Activated CD8-positive, alpha-beta T cell treated with anti-CD3 and anti-CD28 coated beads, Interleukin-2, amount 10 ng/mL, durations not matched to agents 7 days and 5 days (primary cell): ENCODE measurements at regions of chr5 and their contacts with region 1.

Region 1: DNA sequence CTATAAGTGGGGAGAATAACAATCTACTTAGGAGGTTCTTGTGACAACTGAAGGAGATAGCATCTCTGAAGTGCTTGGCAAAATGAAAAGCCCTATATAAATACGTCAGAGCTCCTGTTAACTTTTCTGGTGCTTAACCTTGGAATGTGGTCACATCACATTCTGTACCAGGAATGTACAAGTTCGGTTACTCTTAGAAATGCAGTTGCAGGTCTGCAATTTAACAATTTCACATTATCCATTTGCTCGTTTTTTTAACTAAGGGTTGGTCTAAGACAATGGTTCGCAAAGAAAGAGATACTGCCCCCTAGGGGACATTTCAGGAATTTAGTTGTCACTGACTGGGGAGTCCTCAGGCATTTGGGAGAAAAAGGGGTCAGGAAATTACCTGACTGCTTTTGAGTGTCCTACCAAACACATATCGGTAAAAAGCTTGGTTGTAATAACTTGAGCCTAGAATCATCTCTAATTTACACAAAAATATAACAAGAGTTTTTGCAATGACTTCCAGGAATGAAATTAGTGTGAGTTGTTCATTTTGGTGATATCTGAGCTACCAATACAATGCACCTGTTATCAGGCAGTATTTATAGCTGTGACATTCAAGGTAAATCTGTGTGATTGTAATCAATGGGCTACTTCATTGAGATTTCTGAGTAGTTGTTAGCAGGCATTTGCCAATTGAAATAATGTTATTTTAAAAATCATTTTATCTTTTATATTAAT is 5.4 kb upstream of the HBEGF start:
- DNase-seq: peak; percentile 84
- ATAC-seq: peak; percentile 84
- H3K4me3 Mint-ChIP-seq: no peak overlapping the region
- H3K27ac Mint-ChIP-seq: peak overlapping the region; percentile 10
- H3K4me1 Mint-ChIP-seq: peaks cover 29% of the 10 kb centered on the region
- H3K27me3 Mint-ChIP-seq: peaks cover 7% of the 10 kb centered on the region

Region 2: GRCh38 chr5:140284013-140284412 is 67.8 kb before region 1 on chr5:
- CTCF ChIA-PET with region 1: interaction called, 14 read pairs
- POLR2A ChIA-PET with region 1: interaction called, 3 read pairs
- DNase-seq: no peak
- ATAC-seq: no peak
- H3K4me3 Mint-ChIP-seq: no peak overlapping the region
- H3K27ac Mint-ChIP-seq: no peak overlapping the region
- H3K4me1 Mint-ChIP-seq: peaks cover 15% of the 10 kb centered on the region
- H3K27me3 Mint-ChIP-seq: no peaks in the 10 kb centered on the region

Region 3: DNA sequence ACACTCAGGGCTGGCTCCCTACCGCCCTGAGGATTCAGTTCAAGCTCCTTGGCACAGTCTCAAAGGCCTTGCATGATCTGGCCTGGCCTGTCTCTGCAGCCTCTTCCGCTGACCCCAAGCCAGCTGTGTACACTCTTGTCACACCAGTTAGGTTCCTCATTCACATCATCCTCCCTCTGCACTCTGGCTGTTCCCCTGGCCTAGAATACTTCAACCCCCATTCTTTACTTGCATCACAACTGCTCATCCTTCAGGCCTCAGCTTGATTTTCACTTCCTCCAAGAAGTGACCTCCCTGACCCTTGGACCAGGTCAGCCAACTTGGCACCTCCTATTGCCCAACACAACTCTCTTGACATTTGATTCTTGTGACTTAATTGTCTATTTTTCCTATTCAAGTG is 30.0 kb before region 1 on chr5:
- CTCF ChIA-PET with region 1: interaction called, 10 read pairs
- POLR2A ChIA-PET with region 1: interaction called, 3 read pairs
- DNase-seq: no peak
- ATAC-seq: no peak
- H3K4me3 Mint-ChIP-seq: no peak overlapping the region
- H3K27ac Mint-ChIP-seq: no peak overlapping the region
- H3K4me1 Mint-ChIP-seq: no peaks in the 10 kb centered on the region
- H3K27me3 Mint-ChIP-seq: peaks cover 6% of the 10 kb centered on the region

Region 4: DNA sequence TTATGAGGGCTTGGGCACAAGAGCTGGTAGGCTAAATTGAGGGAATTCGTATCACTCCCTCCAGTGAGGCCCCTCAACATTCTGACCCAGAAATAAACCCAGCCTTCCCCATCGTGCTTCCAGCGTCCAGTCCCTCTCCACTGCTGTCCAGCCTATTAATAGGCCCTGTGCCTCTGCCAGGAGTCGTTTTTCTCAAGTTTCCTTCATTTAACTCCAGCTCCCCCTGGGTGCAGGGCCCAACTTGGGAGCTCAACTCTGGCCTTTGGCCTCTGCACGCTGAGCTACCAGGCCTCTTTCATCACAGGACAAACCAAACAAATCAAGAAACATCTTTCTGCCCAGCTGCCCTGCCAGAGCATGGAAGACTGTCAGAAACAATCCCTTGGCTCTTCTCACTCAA is 15.4 kb before region 1 on chr5:
- CTCF ChIA-PET with region 1: interaction called, 39 read pairs
- POLR2A ChIA-PET with region 1: interaction called, 3 read pairs
- DNase-seq: no peak
- ATAC-seq: no peak
- H3K4me3 Mint-ChIP-seq: no peak overlapping the region
- H3K27ac Mint-ChIP-seq: peak overlapping the region; percentile 23
- H3K4me1 Mint-ChIP-seq: peaks cover 54% of the 10 kb centered on the region
- H3K27me3 Mint-ChIP-seq: no peaks in the 10 kb centered on the region

Region 5: GRCh38 chr5:140372971-140373487 is 21.3 kb after region 1 on chr5:
- CTCF ChIA-PET with region 1: interaction called, 10 read pairs
- POLR2A ChIA-PET with region 1: no interaction called
- DNase-seq: peak; percentile 59
- ATAC-seq: peak; percentile 63
- H3K4me3 Mint-ChIP-seq: no peak overlapping the region
- H3K27ac Mint-ChIP-seq: no peak overlapping the region
- H3K4me1 Mint-ChIP-seq: peaks cover 7% of the 10 kb centered on the region
- H3K27me3 Mint-ChIP-seq: no peaks in the 10 kb centered on the region